ENCODE measurements at regions of chr5 and their contacts with region 1.

Region 1: GRCh38 chr5:4868109-4868735 is 271.9 kb upstream of the ADAMTS16 start:
- DNase-seq: peak; percentile 33
- ATAC-seq: peak; percentile 76
- H3K4me3 ChIP-seq: no peak overlapping the region
- H3K27ac ChIP-seq: no peak overlapping the region
- H3K4me1 ChIP-seq: no peaks in the 10 kb centered on the region
- H3K27me3 ChIP-seq: peaks cover 2% of the 10 kb centered on the region
- CTCF ChIP-seq: peak; percentile 91

Region 2: DNA sequence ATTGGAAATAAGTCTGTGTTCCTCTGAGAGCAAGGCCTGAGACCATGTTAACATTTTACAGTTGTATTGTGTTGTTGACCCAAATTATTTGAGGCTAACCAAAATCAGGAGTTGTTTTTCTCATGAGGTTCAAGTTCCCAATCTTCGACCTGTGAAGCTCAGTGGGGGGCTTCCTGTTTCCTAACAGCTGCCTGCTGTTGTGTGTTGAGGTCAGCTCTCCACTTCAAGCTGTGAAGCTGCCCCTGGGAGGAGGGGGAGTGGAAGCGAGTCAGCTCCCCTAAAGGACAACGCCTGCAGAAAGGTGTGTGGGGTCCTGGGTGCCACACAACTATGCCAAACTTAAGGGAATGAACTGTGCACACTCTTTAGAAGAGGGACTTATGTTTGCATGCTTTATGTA is 977.1 kb before region 1 on chr5:
- CTCF ChIA-PET with region 1: no interaction called
- POLR2A ChIA-PET with region 1: no interaction called
- in situ Hi-C with region 1: no loop called
- intact Hi-C with region 1: no loop called
- DNase-seq: no peak
- ATAC-seq: no peak
- H3K4me3 ChIP-seq: no peak overlapping the region
- H3K27ac ChIP-seq: no peak overlapping the region
- H3K4me1 ChIP-seq: no peaks in the 10 kb centered on the region
- H3K27me3 ChIP-seq: no peaks in the 10 kb centered on the region
- CTCF ChIP-seq: no peak

Region 3: DNA sequence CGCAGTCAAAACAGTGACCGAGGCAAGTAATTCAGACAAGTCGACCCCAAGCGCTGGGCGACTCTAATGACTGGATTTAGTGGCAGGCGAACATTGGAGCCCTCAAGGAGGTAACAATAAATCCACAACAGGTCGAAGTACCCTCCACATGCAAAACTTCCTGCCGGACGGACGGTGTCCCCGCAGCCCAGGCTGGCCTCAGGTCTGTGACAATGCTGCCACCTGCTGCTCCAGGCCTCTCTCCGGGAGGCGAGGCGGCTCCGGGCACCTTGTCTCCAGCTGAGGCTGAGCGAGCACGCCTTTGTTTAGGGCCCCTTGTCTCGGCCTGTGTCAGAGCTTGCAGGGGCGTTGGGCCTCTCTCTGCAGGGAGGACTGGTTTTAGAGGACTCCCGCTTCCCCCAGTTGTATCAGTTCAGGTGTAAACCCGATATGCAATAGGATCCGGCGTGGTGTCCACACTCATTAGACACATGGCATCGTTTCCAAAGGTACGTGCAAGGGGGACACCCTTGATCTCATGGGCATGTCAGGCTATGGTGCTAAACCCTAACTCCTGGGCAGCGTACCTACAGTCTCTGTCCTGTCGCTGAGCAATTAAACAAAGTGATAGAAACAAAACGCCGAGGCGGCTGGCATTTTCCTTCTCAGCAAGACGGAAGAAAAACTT is 356.1 kb before region 1 on chr5:
- CTCF ChIA-PET with region 1: no interaction called
- POLR2A ChIA-PET with region 1: no interaction called
- in situ Hi-C with region 1: no loop called
- intact Hi-C with region 1: loop called (anchors 10 kb)
- DNase-seq: no peak
- ATAC-seq: peak; percentile 94
- H3K4me3 ChIP-seq: peak overlapping the region in 1 of 2 experiments; percentile 36; a peak in 2 of 4 replicates
- H3K27ac ChIP-seq: no peak overlapping the region
- H3K4me1 ChIP-seq: peaks cover 4% of the 10 kb centered on the region; the same call in 1 of the 2 replicates
- H3K27me3 ChIP-seq: peaks cover 4% of the 10 kb centered on the region; the same call in 1 of the 2 replicates
- CTCF ChIP-seq: peak; percentile 81

Region 4: GRCh38 chr5:4576161-4576748 is 292.0 kb before region 1 on chr5:
- CTCF ChIA-PET with region 1: no interaction called
- POLR2A ChIA-PET with region 1: no interaction called
- in situ Hi-C with region 1: no loop called
- intact Hi-C with region 1: no loop called
- DNase-seq: no peak
- ATAC-seq: no peak
- H3K4me3 ChIP-seq: no peak overlapping the region
- H3K27ac ChIP-seq: no peak overlapping the region
- H3K4me1 ChIP-seq: no peaks in the 10 kb centered on the region
- H3K27me3 ChIP-seq: no peaks in the 10 kb centered on the region
- CTCF ChIP-seq: no peak

Region 5: DNA sequence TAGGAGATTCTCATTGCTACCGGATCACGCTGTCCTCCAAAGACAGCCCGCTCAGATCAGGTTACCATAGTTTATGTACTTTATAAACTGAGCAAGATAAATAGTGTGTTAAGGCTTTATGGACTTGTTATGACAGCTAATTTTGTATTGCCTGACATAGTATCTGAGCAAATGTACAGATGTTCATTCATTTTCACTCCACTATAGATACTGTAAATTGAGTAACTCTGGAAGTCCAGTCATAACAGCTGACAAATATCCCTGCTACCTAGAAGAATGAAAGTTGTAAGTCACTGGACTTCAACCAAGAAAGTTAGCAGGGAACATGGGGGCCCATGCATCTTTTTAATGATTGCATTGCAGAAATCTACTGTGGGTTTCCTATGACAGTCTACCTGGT is 20.5 kb before region 1 on chr5:
- CTCF ChIA-PET with region 1: no interaction called
- POLR2A ChIA-PET with region 1: no interaction called
- in situ Hi-C with region 1: no loop called
- intact Hi-C with region 1: no loop called
- DNase-seq: no peak
- ATAC-seq: no peak
- H3K4me3 ChIP-seq: no peak overlapping the region
- H3K27ac ChIP-seq: no peak overlapping the region
- H3K4me1 ChIP-seq: no peaks in the 10 kb centered on the region
- H3K27me3 ChIP-seq: no peaks in the 10 kb centered on the region
- CTCF ChIP-seq: no peak

Region 6: GRCh38 chr5:5919411-5919810 is 1051.2 kb after region 1 on chr5:
- CTCF ChIA-PET with region 1: no interaction called
- POLR2A ChIA-PET with region 1: no interaction called
- in situ Hi-C with region 1: no loop called
- intact Hi-C with region 1: no loop called
- DNase-seq: no peak
- ATAC-seq: no peak
- H3K4me3 ChIP-seq: no peak overlapping the region
- H3K27ac ChIP-seq: no peak overlapping the region
- H3K4me1 ChIP-seq: no peaks in the 10 kb centered on the region
- H3K27me3 ChIP-seq: no peaks in the 10 kb centered on the region
- CTCF ChIP-seq: no peak